ENCODE measurements at regions of chr10 and their contacts with region 1.

Region 1: GRCh38 chr10:92880233-92880861 is 32.0 kb downstream of the EXOC6 start:
- DNase-seq: peak in 4 of 5 donors; percentile 28 to 38 (median 32)
- H3K4me3 ChIP-seq: no peak overlapping the region
- H3K4me3 Mint-ChIP-seq: no peak overlapping the region
- H3K27ac ChIP-seq: no peak overlapping the region
- H3K27ac Mint-ChIP-seq: no peak overlapping the region
- H3K4me1 ChIP-seq: peaks cover 23% of the 10 kb centered on the region
- H3K4me1 Mint-ChIP-seq: peaks cover 21 to 31% (median 24%) of the 10 kb centered on the region in 4 donors
- H3K27me3 ChIP-seq: no peaks in the 10 kb centered on the region
- H3K27me3 Mint-ChIP-seq: no peaks in the 10 kb centered on the region

Region 2: GRCh38 chr10:92839191-92840085 is 40.9 kb before region 1 on chr10:
- CTCF ChIA-PET with region 1: interaction called, 103 read pairs
- POLR2A ChIA-PET with region 1: interaction called, 3 read pairs
- intact Hi-C with region 1: loop called (anchors 1 kb)
- DNase-seq: peak in 3 of 5 donors; percentile 10 to 24 (median 20)
- H3K4me3 ChIP-seq: no peak overlapping the region
- H3K4me3 Mint-ChIP-seq: no peak overlapping the region
- H3K27ac ChIP-seq: no peak overlapping the region
- H3K27ac Mint-ChIP-seq: peak overlapping the region in 2 of 7 donors; percentile 43 to 67
- H3K4me1 ChIP-seq: no peaks in the 10 kb centered on the region
- H3K4me1 Mint-ChIP-seq: peaks cover 0 to 5% (median 2%) of the 10 kb centered on the region in 4 donors
- H3K27me3 ChIP-seq: no peaks in the 10 kb centered on the region
- H3K27me3 Mint-ChIP-seq: no peaks in the 10 kb centered on the region

Region 3: GRCh38 chr10:93006435-93007039 is 126.2 kb after region 1 on chr10:
- CTCF ChIA-PET with region 1: no interaction called
- POLR2A ChIA-PET with region 1: no interaction called
- intact Hi-C with region 1: loop called (anchors 10 kb)
- DNase-seq: no peak
- H3K4me3 ChIP-seq: no peak overlapping the region
- H3K4me3 Mint-ChIP-seq: no peak overlapping the region
- H3K27ac ChIP-seq: no peak overlapping the region
- H3K27ac Mint-ChIP-seq: no peak overlapping the region
- H3K4me1 ChIP-seq: no peaks in the 10 kb centered on the region
- H3K4me1 Mint-ChIP-seq: no peaks in the 10 kb centered on the region
- H3K27me3 ChIP-seq: no peaks in the 10 kb centered on the region
- H3K27me3 Mint-ChIP-seq: no peaks in the 10 kb centered on the region

Region 4: GRCh38 chr10:93288654-93289634 is 408.6 kb after region 1 on chr10:
- CTCF ChIA-PET with region 1: interaction called, 9 read pairs
- POLR2A ChIA-PET with region 1: no interaction called
- intact Hi-C with region 1: loop called (anchors 1 kb)
- DNase-seq: peak; percentile 33 to 43 (median 41)
- H3K4me3 ChIP-seq: no peak overlapping the region
- H3K4me3 Mint-ChIP-seq: no peak overlapping the region
- H3K27ac ChIP-seq: no peak overlapping the region
- H3K27ac Mint-ChIP-seq: no peak overlapping the region
- H3K4me1 ChIP-seq: no peaks in the 10 kb centered on the region
- H3K4me1 Mint-ChIP-seq: no peaks in the 10 kb centered on the region
- H3K27me3 ChIP-seq: no peaks in the 10 kb centered on the region
- H3K27me3 Mint-ChIP-seq: no peaks in the 10 kb centered on the region

Measured in CD4-positive, alpha-beta memory T cell (primary cell).